IMR-90 (cell line): ENCODE measurements at regions of chr1 and their contacts with region 1.

Region 1: GRCh38 chr1:87292684-87293493 is 35.8 kb upstream of the LMO4 start:
- DNase-seq: peak; percentile 65
- ATAC-seq: peak; percentile 68; the same call in 1 of the 2 replicates
- H3K4me3 ChIP-seq: no peak overlapping the region
- H3K27ac ChIP-seq: no peak overlapping the region
- H3K4me1 ChIP-seq: 0 out of 2 replicates have a peak, but pooled peaks cover 1% of the 10 kb centered on the region
- H3K27me3 ChIP-seq: peaks cover 2% of the 10 kb centered on the region
- CTCF ChIP-seq: peak; percentile 77
- POLR2A ChIP-seq: no peak
- RAD21 ChIP-seq: peak; percentile 77

Region 2: GRCh38 chr1:87151500-87152421 is 141.1 kb before region 1 on chr1:
- CTCF ChIA-PET with region 1: interaction called, 3 read pairs
- POLR2A ChIA-PET with region 1: no interaction called
- dilution Hi-C with region 1: no loop called
- in situ Hi-C with region 1: no loop called
- intact Hi-C with region 1: loop called (anchors 2 kb)
- DNase-seq: peak; percentile 58
- ATAC-seq: peak; percentile 93
- H3K4me3 ChIP-seq: peak overlapping the region; percentile 21; the same call in 1 of the 2 replicates
- H3K27ac ChIP-seq: peak overlapping the region; percentile 36
- H3K4me1 ChIP-seq: peaks cover 17% of the 10 kb centered on the region; the same call in 1 of the 2 replicates
- H3K27me3 ChIP-seq: peaks cover 2% of the 10 kb centered on the region; the same call in 1 of the 2 replicates
- CTCF ChIP-seq: peak; percentile 69
- POLR2A ChIP-seq: no peak
- RAD21 ChIP-seq: peak; percentile 77

Region 3: DNA sequence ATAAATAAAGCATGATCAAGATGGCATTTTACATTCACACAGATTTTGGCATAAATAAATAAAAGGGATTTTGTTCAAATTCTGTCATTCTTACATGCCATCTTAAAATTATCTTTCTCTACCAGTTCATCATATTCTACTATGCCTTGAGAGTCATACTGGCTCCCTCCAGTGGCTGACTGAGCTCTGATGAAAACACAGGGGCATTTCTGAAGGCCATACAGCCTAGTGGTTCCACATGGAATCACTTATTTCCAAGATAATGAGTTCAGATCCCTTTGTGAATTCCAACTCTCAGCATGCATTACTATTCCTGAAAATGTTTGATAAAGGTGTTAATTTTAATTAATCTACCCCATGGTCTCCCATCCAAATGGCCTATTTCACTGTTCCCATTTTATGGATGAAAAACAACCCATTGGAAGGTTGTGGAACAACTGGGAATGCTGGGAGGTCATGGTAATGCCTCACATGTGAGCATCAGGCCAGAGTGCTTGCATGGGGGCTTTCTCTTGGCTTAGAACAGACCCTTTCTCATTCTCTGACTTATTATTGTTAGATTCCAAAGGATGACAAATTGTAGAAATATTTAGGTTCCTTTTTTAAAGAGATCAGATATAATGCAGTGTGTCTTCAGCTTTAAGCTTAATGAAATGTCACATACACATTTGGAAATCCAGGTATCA is 768.7 kb after region 1 on chr1:
- CTCF ChIA-PET with region 1: no interaction called
- POLR2A ChIA-PET with region 1: no interaction called
- dilution Hi-C with region 1: no loop called
- in situ Hi-C with region 1: no loop called
- intact Hi-C with region 1: loop called (anchors 5 kb)
- DNase-seq: peak; percentile 70
- ATAC-seq: peak; percentile 96
- H3K4me3 ChIP-seq: no peak overlapping the region
- H3K27ac ChIP-seq: no peak overlapping the region
- H3K4me1 ChIP-seq: no peaks in the 10 kb centered on the region
- H3K27me3 ChIP-seq: no peaks in the 10 kb centered on the region
- CTCF ChIP-seq: peak; percentile 96
- POLR2A ChIP-seq: no peak
- RAD21 ChIP-seq: peak; percentile 82

Region 4: DNA sequence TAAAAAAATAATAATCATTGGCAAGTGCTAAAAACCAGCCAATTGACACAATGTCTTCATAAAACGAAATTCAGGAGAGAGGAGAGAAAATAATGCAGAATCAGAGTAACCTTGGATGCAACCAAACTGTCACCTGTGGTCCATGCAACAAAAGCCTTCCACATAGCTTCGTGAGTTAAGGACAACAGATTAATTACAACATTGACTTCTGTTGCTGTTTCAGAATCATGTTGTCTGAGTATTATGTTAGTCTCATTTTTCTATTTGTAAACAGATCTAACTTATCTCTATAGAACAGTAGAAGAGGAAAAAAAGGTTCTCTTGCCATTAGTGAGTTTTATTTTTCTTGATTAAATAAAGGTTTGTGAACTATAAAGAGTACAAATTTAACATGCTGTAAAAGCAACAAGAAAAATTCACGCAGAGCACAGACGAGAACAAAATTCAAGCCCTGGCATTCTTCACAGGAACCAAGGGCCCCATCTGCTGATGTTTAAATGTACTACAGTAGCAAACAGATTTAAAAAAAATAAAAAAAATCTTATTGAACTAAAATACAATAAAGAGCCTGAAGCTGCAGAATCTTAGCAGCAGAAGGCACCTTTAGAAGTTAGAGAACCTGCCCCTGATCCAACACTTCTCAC is 1010.1 kb after region 1 on chr1:
- CTCF ChIA-PET with region 1: no interaction called
- POLR2A ChIA-PET with region 1: no interaction called
- dilution Hi-C with region 1: no loop called
- in situ Hi-C with region 1: no loop called
- intact Hi-C with region 1: loop called (anchors 1 kb)
- DNase-seq: peak; percentile 55
- ATAC-seq: peak; percentile 82
- H3K4me3 ChIP-seq: no peak overlapping the region
- H3K27ac ChIP-seq: no peak overlapping the region
- H3K4me1 ChIP-seq: no peaks in the 10 kb centered on the region
- H3K27me3 ChIP-seq: no peaks in the 10 kb centered on the region
- CTCF ChIP-seq: peak; percentile 65
- POLR2A ChIP-seq: no peak
- RAD21 ChIP-seq: peak; percentile 72

Region 5: GRCh38 chr1:88549536-88549935 is 1256.6 kb after region 1 on chr1:
- CTCF ChIA-PET with region 1: no interaction called
- POLR2A ChIA-PET with region 1: no interaction called
- dilution Hi-C with region 1: no loop called
- in situ Hi-C with region 1: loop called (anchors 25 kb)
- intact Hi-C with region 1: loop called (anchors 5 kb)
- DNase-seq: peak; percentile 3
- ATAC-seq: no peak
- H3K4me3 ChIP-seq: no peak overlapping the region
- H3K27ac ChIP-seq: no peak overlapping the region
- H3K4me1 ChIP-seq: no peaks in the 10 kb centered on the region
- H3K27me3 ChIP-seq: no peaks in the 10 kb centered on the region
- CTCF ChIP-seq: peak; percentile 22; the same call in 1 of the 2 replicates
- POLR2A ChIP-seq: no peak
- RAD21 ChIP-seq: 0 out of 2 replicates have a peak, but pooled peaks have one; percentile 10